ENCODE measurements at regions of chr6 and their contacts with region 1.

Region 1: GRCh38 chr6:3977875-3978711 is 100.8 kb downstream of the FAM217A start:
- DNase-seq: peak; percentile 52
- H3K4me3 Mint-ChIP-seq: no peak overlapping the region
- H3K27ac Mint-ChIP-seq: no peak overlapping the region
- H3K4me1 Mint-ChIP-seq: peaks cover 8% of the 10 kb centered on the region
- H3K27me3 Mint-ChIP-seq: peaks cover 16% of the 10 kb centered on the region

Region 2: DNA sequence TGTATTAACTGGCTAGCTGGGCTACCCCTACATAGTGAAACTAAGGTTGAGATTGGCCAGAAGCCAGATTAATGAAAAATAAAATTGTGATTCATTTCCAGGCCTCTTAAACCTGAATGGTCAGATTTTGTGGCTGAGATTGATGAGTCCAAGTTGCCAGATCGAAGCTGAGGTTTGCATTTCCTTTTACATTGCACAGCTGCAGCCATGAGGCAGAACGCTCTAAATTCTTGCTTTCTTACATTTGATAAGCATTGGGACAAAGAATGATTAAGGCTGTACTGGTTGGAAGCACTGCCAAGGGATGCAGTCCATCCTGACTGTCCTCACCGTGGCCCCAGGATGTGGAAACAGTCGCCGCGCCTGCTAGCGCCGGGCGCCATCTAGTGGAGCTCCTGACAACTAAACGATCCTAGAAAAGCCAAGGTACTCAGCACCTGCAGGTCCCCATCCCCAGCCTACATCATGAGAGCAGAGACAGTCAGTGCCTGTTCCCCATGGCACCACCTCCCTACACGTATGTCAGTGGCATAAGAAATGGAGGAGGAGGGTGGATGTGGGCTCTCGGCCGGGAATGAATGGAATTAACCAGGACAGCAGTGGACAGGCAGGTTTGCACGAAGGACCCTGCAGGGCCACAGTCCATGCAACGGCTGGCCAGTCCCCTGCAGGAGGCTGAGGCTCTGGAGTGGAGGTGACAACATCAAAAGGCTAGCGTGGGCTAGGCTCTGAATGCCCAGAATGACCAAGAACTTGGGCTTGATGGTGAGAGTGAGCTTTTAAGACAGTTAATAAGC is 245.6 kb before region 1 on chr6:
- CTCF ChIA-PET with region 1: interaction called, 11 read pairs
- POLR2A ChIA-PET with region 1: no interaction called
- DNase-seq: peak; percentile 69
- H3K4me3 Mint-ChIP-seq: no peak overlapping the region
- H3K27ac Mint-ChIP-seq: no peak overlapping the region
- H3K4me1 Mint-ChIP-seq: peaks cover 7% of the 10 kb centered on the region
- H3K27me3 Mint-ChIP-seq: peaks cover 6% of the 10 kb centered on the region

Region 3: GRCh38 chr6:3748208-3749066 is 229.7 kb before region 1 on chr6:
- CTCF ChIA-PET with region 1: interaction called, 85 read pairs
- POLR2A ChIA-PET with region 1: no interaction called
- DNase-seq: peak; percentile 43
- H3K4me3 Mint-ChIP-seq: no peak overlapping the region
- H3K27ac Mint-ChIP-seq: no peak overlapping the region
- H3K4me1 Mint-ChIP-seq: peaks cover 7% of the 10 kb centered on the region
- H3K27me3 Mint-ChIP-seq: peaks cover 25% of the 10 kb centered on the region

Region 4: GRCh38 chr6:3784423-3784822 is 193.7 kb before region 1 on chr6:
- CTCF ChIA-PET with region 1: no interaction called
- POLR2A ChIA-PET with region 1: no interaction called
- DNase-seq: no peak
- H3K4me3 Mint-ChIP-seq: no peak overlapping the region
- H3K27ac Mint-ChIP-seq: no peak overlapping the region
- H3K4me1 Mint-ChIP-seq: no peaks in the 10 kb centered on the region
- H3K27me3 Mint-ChIP-seq: no peaks in the 10 kb centered on the region

Region 5: DNA sequence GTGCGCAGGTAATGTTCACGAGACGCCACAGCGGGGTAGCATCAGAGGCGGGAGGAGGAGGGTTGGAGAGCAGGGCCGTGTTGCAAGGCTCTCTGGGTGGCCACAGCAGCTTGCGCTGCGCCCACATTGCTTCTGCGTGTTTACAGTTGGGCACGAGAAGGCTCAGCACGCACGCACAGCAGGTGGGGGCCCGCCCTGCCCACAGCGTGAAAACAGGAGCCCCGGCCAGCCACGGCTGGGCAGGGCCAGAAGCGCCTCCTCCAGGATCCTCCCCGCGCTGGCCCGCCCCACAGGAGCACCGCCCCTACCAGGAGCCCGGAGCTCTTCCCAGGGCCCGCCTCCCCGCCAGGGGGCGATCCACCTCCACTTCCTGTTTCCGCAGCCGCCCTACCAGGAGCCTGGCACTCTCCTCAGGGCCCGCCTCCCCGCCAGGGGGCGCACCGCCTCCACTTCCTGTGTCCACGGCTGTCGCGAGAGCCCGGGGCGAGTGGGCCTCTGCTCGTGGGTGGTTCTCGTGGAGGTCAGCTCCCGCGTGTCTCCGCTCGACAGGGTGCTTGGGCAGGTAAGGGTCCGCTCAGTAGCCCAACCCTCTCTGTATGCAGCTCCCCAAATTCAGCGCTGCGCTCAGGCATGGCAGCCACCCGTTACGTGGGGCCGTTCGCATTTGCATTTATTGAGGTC is 129.0 kb before region 1 on chr6 and contains the start of gene FAM50B:
- CTCF ChIA-PET with region 1: interaction called, 67 read pairs
- POLR2A ChIA-PET with region 1: interaction called, 3 read pairs
- DNase-seq: peak; percentile 94
- H3K4me3 Mint-ChIP-seq: peak within 1 kb of the TSS; percentile 75
- H3K27ac Mint-ChIP-seq: peak within 1 kb of the TSS; percentile 78
- H3K4me1 Mint-ChIP-seq: peaks cover 37% of the 10 kb centered on the region
- H3K27me3 Mint-ChIP-seq: no peaks in the 10 kb centered on the region
- total RNA-seq, gene FAM50B: 14.4 to 14.7 TPM

Region 6: DNA sequence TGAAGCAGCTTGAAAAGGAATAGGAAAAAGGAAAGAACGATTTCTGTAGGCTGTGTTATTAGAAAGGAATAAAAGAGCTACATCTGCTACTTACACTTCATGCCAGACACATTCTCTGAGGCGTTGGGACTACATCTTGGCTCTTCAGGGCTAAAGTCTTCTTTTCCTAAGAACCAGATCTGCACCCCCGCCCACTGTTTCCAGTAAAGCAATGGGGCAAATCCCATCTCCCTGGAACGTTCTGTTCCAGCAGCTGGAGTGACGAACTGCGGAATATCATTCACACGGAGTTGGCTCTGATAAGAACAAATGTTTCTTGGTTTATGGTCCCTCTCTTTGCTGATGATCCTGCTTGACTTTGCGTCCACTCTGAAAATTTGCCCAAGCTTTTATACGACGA is 102.0 kb before region 1 on chr6:
- CTCF ChIA-PET with region 1: no interaction called
- POLR2A ChIA-PET with region 1: no interaction called
- DNase-seq: no peak
- H3K4me3 Mint-ChIP-seq: no peak overlapping the region
- H3K27ac Mint-ChIP-seq: no peak overlapping the region
- H3K4me1 Mint-ChIP-seq: no peaks in the 10 kb centered on the region
- H3K27me3 Mint-ChIP-seq: peaks cover 2% of the 10 kb centered on the region

Region 7: DNA sequence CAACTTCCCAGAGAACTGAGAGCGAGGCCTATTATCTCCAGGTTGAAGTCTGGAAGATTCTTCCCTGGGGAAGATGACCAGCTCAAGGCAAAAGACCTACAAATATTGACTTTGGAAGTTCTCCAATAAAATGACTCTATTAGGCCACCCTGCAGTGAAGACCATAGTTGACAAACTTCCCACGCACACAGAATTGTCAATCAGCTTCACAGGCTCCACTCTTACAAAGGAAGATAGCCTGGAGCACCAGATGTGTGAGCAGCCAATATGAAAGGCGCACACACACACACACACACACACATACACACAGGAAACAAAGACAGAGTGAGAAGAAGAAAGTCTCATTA is 15.2 kb before region 1 on chr6:
- CTCF ChIA-PET with region 1: interaction called, 18 read pairs
- POLR2A ChIA-PET with region 1: no interaction called
- DNase-seq: no peak
- H3K4me3 Mint-ChIP-seq: no peak overlapping the region
- H3K27ac Mint-ChIP-seq: no peak overlapping the region
- H3K4me1 Mint-ChIP-seq: peaks cover 1% of the 10 kb centered on the region
- H3K27me3 Mint-ChIP-seq: peaks cover 1% of the 10 kb centered on the region

Region 8: DNA sequence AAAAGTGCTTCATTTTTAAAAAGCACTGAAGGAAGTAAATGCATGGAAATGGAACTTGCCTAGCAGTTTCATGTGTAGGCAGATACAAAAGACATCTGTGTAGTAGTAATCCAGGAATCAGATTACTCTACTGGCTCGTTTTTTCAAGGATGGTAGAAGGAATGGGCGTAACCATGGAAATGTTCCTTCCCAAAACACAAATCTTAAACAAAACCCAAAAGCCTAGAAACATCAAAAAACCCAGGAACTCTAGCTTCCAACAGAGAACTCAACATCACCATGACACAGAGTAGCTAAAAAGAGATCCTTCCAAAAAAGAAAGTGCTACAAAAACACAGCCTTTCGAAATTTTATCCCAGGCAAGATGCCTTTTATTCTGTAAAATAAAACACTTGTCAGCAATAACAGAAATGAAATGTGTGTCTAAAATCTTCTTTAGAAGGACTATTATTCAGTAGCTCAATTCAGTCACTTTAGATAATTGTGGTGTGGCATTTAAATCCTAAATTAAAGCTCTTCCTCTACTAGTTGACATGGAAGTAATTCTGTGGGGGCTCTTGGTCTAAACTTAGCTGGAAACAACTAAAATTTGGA is 19.2 kb after region 1 on chr6:
- CTCF ChIA-PET with region 1: interaction called, 27 read pairs
- POLR2A ChIA-PET with region 1: no interaction called
- DNase-seq: no peak
- H3K4me3 Mint-ChIP-seq: no peak overlapping the region
- H3K27ac Mint-ChIP-seq: no peak overlapping the region
- H3K4me1 Mint-ChIP-seq: no peaks in the 10 kb centered on the region
- H3K27me3 Mint-ChIP-seq: no peaks in the 10 kb centered on the region

Region 9: DNA sequence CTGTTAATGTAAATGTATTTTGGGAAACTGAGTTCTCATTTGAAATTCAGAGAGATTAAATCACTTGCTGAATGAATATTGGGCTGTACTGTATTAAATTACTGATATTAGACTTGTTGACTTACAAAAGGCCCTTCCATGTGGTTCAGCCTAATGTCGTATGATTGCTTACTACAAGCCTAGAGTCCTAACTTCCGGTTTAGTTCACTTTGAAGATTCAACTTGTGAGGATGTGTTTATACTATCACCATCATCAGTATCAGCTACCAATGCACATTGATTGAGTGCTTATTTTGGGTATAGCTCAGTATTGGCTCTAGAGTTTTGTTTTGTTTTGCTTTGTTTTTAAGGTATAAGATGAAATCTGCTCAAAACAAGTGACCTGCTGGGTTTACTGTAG is 52.6 kb after region 1 on chr6:
- CTCF ChIA-PET with region 1: no interaction called
- POLR2A ChIA-PET with region 1: no interaction called
- DNase-seq: no peak
- H3K4me3 Mint-ChIP-seq: no peak overlapping the region
- H3K27ac Mint-ChIP-seq: peak overlapping the region; percentile 10
- H3K4me1 Mint-ChIP-seq: peaks cover 66% of the 10 kb centered on the region
- H3K27me3 Mint-ChIP-seq: no peaks in the 10 kb centered on the region

Region 10: GRCh38 chr6:4093288-4093687 is 115.2 kb after region 1 on chr6:
- CTCF ChIA-PET with region 1: no interaction called
- POLR2A ChIA-PET with region 1: no interaction called
- DNase-seq: no peak
- H3K4me3 Mint-ChIP-seq: no peak overlapping the region
- H3K27ac Mint-ChIP-seq: no peak overlapping the region
- H3K4me1 Mint-ChIP-seq: no peaks in the 10 kb centered on the region
- H3K27me3 Mint-ChIP-seq: peaks cover 2% of the 10 kb centered on the region

Measured in activated CD4-positive, alpha-beta memory T cell treated with anti-CD3 and anti-CD28 coated beads, Interleukin-2, amount 10 ng/mL, durations not matched to agents 7 days and 5 days (primary cell).